ENCODE measurements at regions of chr6 and their contacts with region 1.

Region 1: GRCh38 chr6:87078983-87079616 is 15.8 kb downstream of the CGA start:
- DNase-seq: peak; percentile 77
- H3K4me3 Mint-ChIP-seq: no peak overlapping the region
- H3K27ac Mint-ChIP-seq: no peak overlapping the region
- H3K4me1 Mint-ChIP-seq: no peaks in the 10 kb centered on the region
- H3K27me3 Mint-ChIP-seq: peaks cover 29% of the 10 kb centered on the region
- CTCF ChIP-seq: peak; percentile 88

Region 2: GRCh38 chr6:86913795-86914194 is 165.3 kb before region 1 on chr6:
- CTCF ChIA-PET with region 1: no interaction called
- POLR2A ChIA-PET with region 1: no interaction called
- intact Hi-C with region 1: no loop called
- DNase-seq: peak; percentile 35
- H3K4me3 Mint-ChIP-seq: no peak overlapping the region
- H3K27ac Mint-ChIP-seq: no peak overlapping the region
- H3K4me1 Mint-ChIP-seq: peaks cover 14% of the 10 kb centered on the region
- H3K27me3 Mint-ChIP-seq: no peaks in the 10 kb centered on the region
- CTCF ChIP-seq: no peak

Region 3: GRCh38 chr6:87066449-87067333 is 12.4 kb before region 1 on chr6:
- CTCF ChIA-PET with region 1: interaction called, 34 read pairs
- POLR2A ChIA-PET with region 1: no interaction called
- intact Hi-C with region 1: no loop called
- DNase-seq: peak; percentile 62
- H3K4me3 Mint-ChIP-seq: peak overlapping the region; percentile 60
- H3K27ac Mint-ChIP-seq: no peak overlapping the region
- H3K4me1 Mint-ChIP-seq: peaks cover 10% of the 10 kb centered on the region
- H3K27me3 Mint-ChIP-seq: peaks cover 41% of the 10 kb centered on the region
- CTCF ChIP-seq: peak; percentile 72

Region 4: GRCh38 chr6:87093651-87094050 is 14.6 kb after region 1 on chr6:
- CTCF ChIA-PET with region 1: interaction called, 18 read pairs
- POLR2A ChIA-PET with region 1: no interaction called
- intact Hi-C with region 1: no loop called
- DNase-seq: no peak
- H3K4me3 Mint-ChIP-seq: no peak overlapping the region
- H3K27ac Mint-ChIP-seq: no peak overlapping the region
- H3K4me1 Mint-ChIP-seq: no peaks in the 10 kb centered on the region
- H3K27me3 Mint-ChIP-seq: peaks cover 24% of the 10 kb centered on the region
- CTCF ChIP-seq: no peak

Region 5: GRCh38 chr6:87102151-87102621 is 23.1 kb after region 1 on chr6:
- CTCF ChIA-PET with region 1: interaction called, 10 read pairs
- POLR2A ChIA-PET with region 1: no interaction called
- intact Hi-C with region 1: no loop called
- DNase-seq: no peak
- H3K4me3 Mint-ChIP-seq: no peak overlapping the region
- H3K27ac Mint-ChIP-seq: no peak overlapping the region
- H3K4me1 Mint-ChIP-seq: no peaks in the 10 kb centered on the region
- H3K27me3 Mint-ChIP-seq: peaks cover 16% of the 10 kb centered on the region
- CTCF ChIP-seq: no peak

Region 6: DNA sequence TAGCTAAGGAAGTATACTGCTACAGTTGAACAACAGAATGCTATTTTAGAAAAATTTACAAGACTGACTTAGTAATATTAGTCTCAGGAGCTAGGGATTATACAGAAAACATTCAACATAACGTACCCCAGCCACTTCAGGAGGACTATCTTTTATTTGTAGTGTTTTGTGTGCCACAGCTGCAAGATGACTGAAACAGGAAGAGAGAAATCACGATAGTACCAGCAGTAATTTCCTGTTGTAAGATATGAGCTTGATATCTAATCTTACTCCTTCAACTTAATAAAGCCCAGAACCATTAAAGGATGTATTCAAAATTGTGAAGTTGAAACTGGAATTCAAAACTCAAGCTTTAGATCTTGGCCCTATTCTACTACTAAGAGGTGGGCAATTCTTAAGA is 435.7 kb after region 1 on chr6:
- CTCF ChIA-PET with region 1: no interaction called
- POLR2A ChIA-PET with region 1: no interaction called
- intact Hi-C with region 1: no loop called
- DNase-seq: no peak
- H3K4me3 Mint-ChIP-seq: no peak overlapping the region
- H3K27ac Mint-ChIP-seq: no peak overlapping the region
- H3K4me1 Mint-ChIP-seq: no peaks in the 10 kb centered on the region
- H3K27me3 Mint-ChIP-seq: no peaks in the 10 kb centered on the region
- CTCF ChIP-seq: no peak